H1 (cell line): ENCODE measurements at regions of chr11 and their contacts with region 1.

Region 1: GRCh38 chr11:63916837-63917691 is at the start of gene RCOR2:
- DNase-seq: peak in 1 of 2 experiments; percentile 88
- H3K4me3 ChIP-seq: peak within 1 kb of the TSS; percentile 67 to 95 (median 89)
- H3K27ac ChIP-seq: peak within 1 kb of the TSS; percentile 95
- H3K4me1 ChIP-seq: peaks cover 2 to 37% (median 31%) of the 10 kb centered on the region in 4 experiments
- H3K27me3 ChIP-seq: no peaks in the 10 kb centered on the region
- CTCF ChIP-seq: no peak
- EP300 ChIP-seq: no peak; a peak in 1 of 3 replicates
- POLR2A ChIP-seq: peak in 1 of 2 experiments; percentile 41; a peak in 1 of 3 replicates
- RAD21 ChIP-seq: no peak
- total RNA-seq, gene RCOR2: 78.0 and 80.1 TPM in 2 replicates

Region 2: GRCh38 chr11:63829823-63830489 is 87.1 kb before region 1 on chr11:
- CTCF ChIA-PET with region 1: interaction called, 17 read pairs
- POLR2A ChIA-PET with region 1: interaction called, 8 read pairs
- DNase-seq: peak in 1 of 2 experiments; percentile 65
- H3K4me3 ChIP-seq: no peak overlapping the region
- H3K27ac ChIP-seq: no peak overlapping the region
- H3K4me1 ChIP-seq: peaks cover 3 to 12% (median 8%) of the 10 kb centered on the region in 4 experiments
- H3K27me3 ChIP-seq: no peaks in the 10 kb centered on the region
- CTCF ChIP-seq: peak; percentile 69 to 85 (median 80)
- EP300 ChIP-seq: no peak
- POLR2A ChIP-seq: no peak
- RAD21 ChIP-seq: peak; percentile 76 to 84

Region 3: GRCh38 chr11:63845303-63845702 is 71.8 kb before region 1 on chr11:
- CTCF ChIA-PET with region 1: interaction called, 19 read pairs
- POLR2A ChIA-PET with region 1: interaction called, 45 read pairs
- DNase-seq: no peak
- H3K4me3 ChIP-seq: no peak overlapping the region
- H3K27ac ChIP-seq: no peak overlapping the region
- H3K4me1 ChIP-seq: peaks cover 28 to 43% (median 35%) of the 10 kb centered on the region in 4 experiments
- H3K27me3 ChIP-seq: no peaks in the 10 kb centered on the region
- CTCF ChIP-seq: no peak
- EP300 ChIP-seq: no peak
- POLR2A ChIP-seq: no peak
- RAD21 ChIP-seq: no peak

Region 4: DNA sequence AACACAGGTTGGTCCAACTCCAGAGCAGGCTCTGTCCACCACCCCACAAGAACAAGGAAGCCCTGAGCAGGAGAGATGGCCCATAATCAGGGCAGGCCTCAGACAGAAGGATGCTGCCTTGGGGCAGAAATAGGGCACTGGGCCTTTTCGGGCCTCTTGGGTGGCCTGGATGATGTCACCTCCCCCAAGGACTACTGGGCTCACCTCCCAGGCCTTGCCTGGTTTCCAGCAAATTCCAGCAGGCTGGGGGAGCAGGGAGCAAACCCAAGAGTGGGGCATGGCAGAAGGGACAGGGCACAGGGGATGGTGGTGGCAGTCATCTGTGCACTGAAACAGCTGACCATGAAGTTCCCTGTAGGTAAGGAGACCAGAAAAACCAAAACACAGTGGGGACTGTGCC is 16.4 kb after region 1 on chr11:
- CTCF ChIA-PET with region 1: interaction called, 129 read pairs
- POLR2A ChIA-PET with region 1: interaction called, 173 read pairs
- DNase-seq: no peak
- H3K4me3 ChIP-seq: no peak overlapping the region
- H3K27ac ChIP-seq: no peak overlapping the region
- H3K4me1 ChIP-seq: peaks cover 0 to 4% (median 0%) of the 10 kb centered on the region in 4 experiments; a peak in 1 of 7 replicates
- H3K27me3 ChIP-seq: peaks cover 0 to 3% (median 2%) of the 10 kb centered on the region in 4 experiments; a peak in 3 of 7 replicates
- CTCF ChIP-seq: no peak
- EP300 ChIP-seq: no peak
- POLR2A ChIP-seq: no peak
- RAD21 ChIP-seq: no peak

Region 5: DNA sequence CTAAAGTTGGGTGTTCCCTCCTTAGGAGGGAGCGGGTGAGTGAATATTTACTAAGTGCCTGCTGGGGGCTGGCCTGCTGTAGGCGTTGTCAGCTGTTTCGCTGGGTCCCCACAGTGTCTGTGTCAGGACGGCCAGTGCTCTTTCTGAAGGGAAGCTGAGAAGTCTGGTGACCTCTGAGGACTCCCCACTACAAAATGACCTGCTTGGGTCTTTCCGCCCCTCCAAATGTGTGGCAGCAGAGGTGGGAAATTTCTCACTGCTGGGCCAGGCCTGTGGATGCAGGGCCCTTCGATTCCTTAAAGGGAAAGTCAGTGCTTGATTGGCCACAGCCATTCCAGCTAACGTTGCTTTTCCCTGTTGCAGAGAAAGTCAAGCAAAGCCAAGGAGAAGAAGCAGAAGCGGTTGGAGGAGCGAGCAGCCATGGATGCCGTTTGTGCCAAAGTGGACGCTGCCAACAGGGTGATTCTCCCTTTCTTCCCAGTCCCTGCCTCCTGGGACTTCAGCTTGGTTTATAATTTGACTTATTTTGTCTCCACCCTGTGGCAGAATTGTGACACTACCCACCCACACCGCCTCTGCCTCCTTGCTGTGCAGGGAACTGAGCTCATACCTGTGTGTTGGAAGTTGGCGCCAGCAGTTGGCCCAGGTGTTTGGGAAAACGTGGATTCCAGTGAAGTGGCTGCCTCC is 28.6 kb after region 1 on chr11:
- CTCF ChIA-PET with region 1: interaction called, 30 read pairs
- POLR2A ChIA-PET with region 1: interaction called, 15 read pairs
- DNase-seq: peak; percentile 27 to 72
- H3K4me3 ChIP-seq: no peak overlapping the region
- H3K27ac ChIP-seq: no peak overlapping the region
- H3K4me1 ChIP-seq: no peaks in the 10 kb centered on the region; a peak in 1 of 7 replicates
- H3K27me3 ChIP-seq: no peaks in the 10 kb centered on the region
- CTCF ChIP-seq: peak; percentile 55 to 72 (median 72)
- EP300 ChIP-seq: no peak
- POLR2A ChIP-seq: no peak
- RAD21 ChIP-seq: peak; percentile 73 to 77

Region 6: GRCh38 chr11:64284048-64284961 is 367.2 kb after region 1 on chr11 and contains the start of gene BAD:
- CTCF ChIA-PET with region 1: no interaction called
- POLR2A ChIA-PET with region 1: no interaction called
- DNase-seq: peak in 1 of 2 experiments; percentile 96
- H3K4me3 ChIP-seq: peak within 1 kb of the TSS; percentile 49 to 70 (median 69)
- H3K27ac ChIP-seq: peak within 1 kb of the TSS; percentile 68; the same call in 1 of the 2 replicates
- H3K4me1 ChIP-seq: peaks cover 0 to 8% (median 4%) of the 10 kb centered on the region in 4 experiments; a peak in 4 of 7 replicates
- H3K27me3 ChIP-seq: peaks cover 0 to 7% (median 3%) of the 10 kb centered on the region in 4 experiments; a peak in 3 of 7 replicates
- CTCF ChIP-seq: no peak
- EP300 ChIP-seq: no peak
- POLR2A ChIP-seq: peak in 1 of 2 experiments; percentile 25; a peak in 1 of 3 replicates
- RAD21 ChIP-seq: no peak
- total RNA-seq, gene BAD: 23.1 and 25.3 TPM in 2 replicates